ENCODE measurements at regions of chr7 and their contacts with region 1.

Region 1: DNA sequence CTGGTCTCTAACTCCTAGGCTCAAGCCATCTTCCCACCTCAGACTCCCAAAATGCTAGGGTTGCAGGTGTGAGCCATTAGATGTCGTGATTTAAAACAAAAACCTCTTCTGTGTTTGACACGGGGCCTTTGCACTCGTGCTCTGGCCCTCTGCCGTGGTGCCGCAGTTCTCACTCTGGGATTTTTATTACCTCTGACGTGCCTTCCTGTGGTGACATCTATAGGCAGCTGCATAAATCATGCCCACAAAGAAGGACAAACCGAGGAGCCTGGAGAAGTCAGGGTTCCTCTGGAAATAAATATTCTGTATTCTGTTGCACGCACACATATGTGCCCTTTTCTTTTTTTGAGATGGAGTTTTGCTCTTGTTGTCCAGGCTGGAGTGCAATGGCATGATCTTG is 25.9 kb upstream of the OCM start:
- DNase-seq: no peak
- H3K4me3 ChIP-seq: no peak overlapping the region
- H3K27ac ChIP-seq: no peak overlapping the region
- H3K27me3 ChIP-seq: no peaks in the 10 kb centered on the region
- CTCF ChIP-seq: no peak

Region 2: GRCh38 chr7:5797716-5798115 is 57.0 kb before region 1 on chr7:
- intact Hi-C with region 1: no loop called
- DNase-seq: no peak
- H3K4me3 ChIP-seq: no peak overlapping the region
- H3K27ac ChIP-seq: no peak overlapping the region
- H3K27me3 ChIP-seq: no peaks in the 10 kb centered on the region
- CTCF ChIP-seq: no peak

Region 3: GRCh38 chr7:6015917-6016652 is 161.3 kb after region 1 on chr7:
- intact Hi-C with region 1: loop called in 1 of 2 experiments (anchors 10 kb)
- DNase-seq: peak in 3 of 10 donors; percentile 12 to 49 (median 49)
- H3K4me3 ChIP-seq: peak overlapping the region in 1 of 59 donors; percentile 6
- H3K27ac ChIP-seq: peak overlapping the region in 37 of 59 donors; percentile 2 to 71 (median 39)
- H3K27me3 ChIP-seq: no peaks in the 10 kb centered on the region
- CTCF ChIP-seq: no peak

Region 4: DNA sequence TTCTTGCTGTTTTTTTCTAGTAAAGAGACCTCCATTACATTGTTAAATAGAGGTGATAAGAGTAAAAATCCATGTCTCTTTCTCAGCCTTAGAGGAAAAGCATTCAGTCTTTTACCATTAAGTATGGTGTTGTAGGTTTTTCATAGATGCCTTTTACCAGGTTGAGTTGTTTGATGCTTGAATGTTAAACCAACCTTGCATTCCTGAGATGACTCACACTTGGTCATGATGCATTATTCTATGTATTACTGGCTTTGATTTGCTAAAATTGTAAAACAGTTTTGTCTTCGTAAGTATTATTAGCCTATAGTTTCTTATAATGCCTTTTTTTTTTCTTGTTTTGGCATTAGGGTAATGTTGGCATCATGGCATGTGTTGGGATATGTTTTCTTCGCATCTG is 266.4 kb after region 1 on chr7:
- intact Hi-C with region 1: no loop called
- DNase-seq: no peak
- H3K4me3 ChIP-seq: no peak overlapping the region
- H3K27ac ChIP-seq: no peak overlapping the region
- H3K27me3 ChIP-seq: no peaks in the 10 kb centered on the region
- CTCF ChIP-seq: no peak

Region 5: GRCh38 chr7:6323967-6324701 is 469.4 kb after region 1 on chr7:
- intact Hi-C with region 1: loop called in 1 of 2 experiments (anchors 10 kb)
- DNase-seq: no peak
- H3K4me3 ChIP-seq: no peak overlapping the region
- H3K27ac ChIP-seq: no peak overlapping the region
- H3K27me3 ChIP-seq: no peaks in the 10 kb centered on the region
- CTCF ChIP-seq: no peak

Measured in dorsolateral prefrontal cortex (tissue), 120 donors.